ENCODE measurements at regions of chr12 and their contacts with region 1.

Region 1: GRCh38 chr12:45543906-45544315 is 185.6 kb upstream of the ARID2 start:
- DNase-seq: peak in 1 of 3 donors; percentile 73
- ATAC-seq: peak; percentile 95
- H3K4me3 ChIP-seq: no peak overlapping the region
- H3K4me1 ChIP-seq: no peaks in the 10 kb centered on the region
- CTCF ChIP-seq: peak; percentile 49

Region 2: DNA sequence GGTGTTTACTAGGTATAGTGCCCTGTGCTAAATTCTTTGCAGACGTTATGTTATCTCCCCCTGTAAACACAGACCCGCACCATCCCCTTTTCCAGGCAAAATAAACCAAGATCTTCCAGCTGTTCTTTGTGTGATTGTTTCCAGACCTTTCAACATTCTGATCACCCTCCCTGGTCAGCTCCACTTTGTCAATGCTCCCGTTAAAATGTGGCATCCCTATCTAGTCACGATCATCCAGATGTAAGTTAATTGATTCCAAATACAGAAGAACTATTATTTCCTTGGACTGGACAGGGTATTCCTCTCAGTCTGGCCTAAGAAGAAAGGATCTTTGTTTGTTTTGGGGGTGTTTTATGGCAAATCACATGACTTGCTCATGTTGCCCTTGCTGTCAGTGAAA is 58.0 kb after region 1 on chr12:
- intact Hi-C with region 1: no loop called
- DNase-seq: no peak
- ATAC-seq: no peak
- H3K4me3 ChIP-seq: no peak overlapping the region
- H3K4me1 ChIP-seq: no peaks in the 10 kb centered on the region
- CTCF ChIP-seq: no peak

Region 3: GRCh38 chr12:45728630-45729232 is 184.8 kb after region 1 on chr12:
- intact Hi-C with region 1: loop called in 1 of 2 experiments (anchors 10 kb)
- DNase-seq: peak; percentile 98 to 99 (median 98)
- ATAC-seq: peak; percentile 82
- H3K4me3 ChIP-seq: peak overlapping the region; percentile 78
- H3K4me1 ChIP-seq: peaks cover 9% of the 10 kb centered on the region
- CTCF ChIP-seq: peak; percentile 99